ENCODE measurements at regions of chr2 and their contacts with region 1.

Region 1: GRCh38 chr2:145584353-145584752 is 1064.4 kb upstream of the ZEB2 start:
- DNase-seq: no peak
- ATAC-seq: no peak
- H3K4me3 ChIP-seq: no peak overlapping the region
- H3K27ac ChIP-seq: no peak overlapping the region
- H3K4me1 ChIP-seq: 0 out of 2 replicates have a peak, but pooled peaks cover 4% of the 10 kb centered on the region
- H3K27me3 ChIP-seq: no peaks in the 10 kb centered on the region
- CTCF ChIP-seq: no peak

Region 2: GRCh38 chr2:145569108-145569507 is 15.2 kb before region 1 on chr2:
- CTCF ChIA-PET with region 1: no interaction called
- POLR2A ChIA-PET with region 1: interaction called, 22 read pairs
- intact Hi-C with region 1: no loop called
- DNase-seq: peak; percentile 69
- ATAC-seq: peak; percentile 45
- H3K4me3 ChIP-seq: no peak overlapping the region
- H3K27ac ChIP-seq: 0 out of 2 replicates have a peak overlapping the region, but pooled peaks have one; percentile 1
- H3K4me1 ChIP-seq: peaks cover 12% of the 10 kb centered on the region; the same call in 1 of the 2 replicates
- H3K27me3 ChIP-seq: no peaks in the 10 kb centered on the region
- CTCF ChIP-seq: no peak

Measured in PC-3 (cell line).